Sigmoid colon (tissue), 7 donors: ENCODE measurements at regions of chr1 and their contacts with region 1.

Region 1: DNA sequence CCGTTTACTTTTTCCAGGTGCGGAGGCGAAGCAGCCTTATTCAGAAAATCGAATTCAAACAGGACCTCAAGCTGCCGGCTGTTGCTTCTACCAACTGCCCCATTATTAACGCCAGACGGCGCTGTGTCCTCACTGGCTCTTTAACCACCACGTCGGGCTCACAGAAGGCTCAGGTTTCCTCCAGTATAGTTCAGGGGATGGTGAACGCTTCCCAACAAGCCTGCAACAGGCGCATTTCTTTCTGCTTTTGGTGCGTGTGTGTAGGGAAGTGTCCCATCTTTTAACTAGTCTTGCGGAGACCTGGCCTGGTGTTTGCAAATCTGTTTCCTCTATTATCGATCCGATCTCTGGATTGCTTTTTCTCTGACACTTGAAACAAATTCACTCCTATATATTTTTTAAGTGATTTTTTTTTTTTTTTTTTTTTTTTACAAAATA is 791 bp upstream of the STUM start:
- DNase-seq: peak; percentile 95
- H3K4me3 ChIP-seq: peak overlapping the region in 3 of 4 donors; percentile 73 to 76 (median 75)
- H3K27ac ChIP-seq: peak overlapping the region; percentile 79 to 93 (median 91)
- H3K4me1 ChIP-seq: peaks cover 0 to 59% (median 43%) of the 10 kb centered on the region in 4 donors
- H3K27me3 ChIP-seq: peaks cover 0 to 8% (median 0%) of the 10 kb centered on the region in 3 donors
- CTCF ChIP-seq: peak; percentile 88 to 92 (median 90)
- EP300 ChIP-seq: no peak
- POLR2A ChIP-seq: peak in 1 of 2 donors; percentile 7

Region 2: DNA sequence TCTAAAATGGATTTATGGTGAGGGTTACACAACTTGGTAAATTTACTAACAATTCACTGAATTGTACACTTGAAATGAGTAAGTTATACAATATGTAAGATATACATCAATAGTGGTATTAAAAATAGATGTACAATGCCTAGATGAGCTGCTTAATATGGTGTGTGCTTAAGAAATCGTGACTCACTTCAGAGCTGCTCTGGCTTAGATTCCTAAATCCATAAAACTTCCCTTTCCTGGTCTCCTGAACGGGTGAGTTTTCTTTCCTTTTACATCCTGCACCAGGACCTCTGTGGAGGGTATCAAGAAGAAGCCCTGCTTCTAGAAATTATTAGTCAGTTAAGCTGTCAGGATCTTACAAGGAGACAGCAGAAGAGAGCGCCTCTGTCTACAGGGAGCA is 454.8 kb before region 1 on chr1:
- intact Hi-C with region 1: no loop called
- DNase-seq: no peak
- H3K4me3 ChIP-seq: no peak overlapping the region
- H3K27ac ChIP-seq: no peak overlapping the region
- H3K4me1 ChIP-seq: no peaks in the 10 kb centered on the region
- H3K27me3 ChIP-seq: no peaks in the 10 kb centered on the region
- CTCF ChIP-seq: no peak
- EP300 ChIP-seq: no peak
- POLR2A ChIP-seq: no peak

Region 3: GRCh38 chr1:226407497-226408284 is 140.1 kb before region 1 on chr1 and contains the start of gene PARP1:
- intact Hi-C with region 1: loop called (anchors 5 kb)
- DNase-seq: peak; percentile 97
- H3K4me3 ChIP-seq: peak within 1 kb of the TSS; percentile 76 to 86 (median 82)
- H3K27ac ChIP-seq: peak within 1 kb of the TSS; percentile 89 to 94 (median 93)
- H3K4me1 ChIP-seq: peaks cover 0 to 46% (median 43%) of the 10 kb centered on the region in 4 donors
- H3K27me3 ChIP-seq: no peaks in the 10 kb centered on the region
- CTCF ChIP-seq: peak in 1 of 4 experiments; percentile 81
- EP300 ChIP-seq: no peak
- POLR2A ChIP-seq: peak; percentile 68 to 77
- total RNA-seq, gene PARP1: 107 to 168 (median 152) TPM

Region 4: GRCh38 chr1:226569879-226570547 is 22.2 kb after region 1 on chr1:
- intact Hi-C with region 1: loop called (anchors 2 kb)
- DNase-seq: peak; percentile 62
- H3K4me3 ChIP-seq: no peak overlapping the region
- H3K27ac ChIP-seq: peak overlapping the region; percentile 76 to 85 (median 84)
- H3K4me1 ChIP-seq: peaks cover 0 to 76% (median 61%) of the 10 kb centered on the region in 4 donors
- H3K27me3 ChIP-seq: no peaks in the 10 kb centered on the region
- CTCF ChIP-seq: peak in 1 of 4 experiments; percentile 16
- EP300 ChIP-seq: no peak
- POLR2A ChIP-seq: no peak

Region 5: DNA sequence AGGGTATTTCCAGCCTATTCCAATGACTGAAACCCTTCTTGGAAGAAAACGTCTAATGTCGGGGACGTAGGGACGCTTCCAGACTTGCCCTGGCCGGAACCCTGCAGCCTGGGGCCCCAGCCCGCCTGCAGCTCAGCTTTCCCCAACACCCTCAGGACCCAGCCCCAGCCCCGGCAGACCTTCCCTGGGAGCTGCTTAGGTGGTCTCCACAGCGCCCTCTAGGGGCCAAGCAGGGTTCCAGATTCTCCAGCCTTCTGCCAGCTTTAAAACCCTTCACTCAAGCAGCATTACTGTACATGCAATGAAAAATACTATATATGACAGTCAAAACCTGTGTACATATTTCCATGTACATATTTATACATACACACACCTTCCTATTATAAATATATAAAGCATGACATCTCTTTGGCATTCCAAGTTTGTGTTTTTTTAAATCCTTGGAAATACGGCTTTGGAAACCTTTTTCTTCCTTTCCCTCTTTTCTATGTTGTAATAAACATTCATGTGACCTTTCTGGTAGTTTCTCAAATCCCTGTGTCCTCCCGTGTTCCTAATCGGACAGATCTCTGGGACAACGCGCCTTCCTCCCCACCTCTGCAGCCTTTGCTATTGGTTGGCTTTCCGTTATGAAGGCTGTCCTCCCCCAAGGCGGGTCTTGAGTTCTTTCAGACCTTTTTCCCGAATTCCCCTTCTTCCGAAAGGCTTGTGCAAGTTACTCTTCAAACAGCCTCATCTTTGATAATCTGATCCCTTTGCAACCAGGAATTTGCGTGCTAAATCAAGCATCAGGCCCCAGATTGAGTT is 61.1 kb after region 1 on chr1:
- intact Hi-C with region 1: loop called (anchors 1 kb)
- DNase-seq: peak; percentile 78
- H3K4me3 ChIP-seq: no peak overlapping the region
- H3K27ac ChIP-seq: peak overlapping the region in 2 of 4 donors; percentile 15 to 27
- H3K4me1 ChIP-seq: peaks cover 0 to 35% (median 27%) of the 10 kb centered on the region in 4 donors
- H3K27me3 ChIP-seq: no peaks in the 10 kb centered on the region
- CTCF ChIP-seq: peak; percentile 36 to 86 (median 74)
- EP300 ChIP-seq: no peak
- POLR2A ChIP-seq: no peak